ENCODE measurements at regions of chr18 and their contacts with region 1.

Region 1: DNA sequence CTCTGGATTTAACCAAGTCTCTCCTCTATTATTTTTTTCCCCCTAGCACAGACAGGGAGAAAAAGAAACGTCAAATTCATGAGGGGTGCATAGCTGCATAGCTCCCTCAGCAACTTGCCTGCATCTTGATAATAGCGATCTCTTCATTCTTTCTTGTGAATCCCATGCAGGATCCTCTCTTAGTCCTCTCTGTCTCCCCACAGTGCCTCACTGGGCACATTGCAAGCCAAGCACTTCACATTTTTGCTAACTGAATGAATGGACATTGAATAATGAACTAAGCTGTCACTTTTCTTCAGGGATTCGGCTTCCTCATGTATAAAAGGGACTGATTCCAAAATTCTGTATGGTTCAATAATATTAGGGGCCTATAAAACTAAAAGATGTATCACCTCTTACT is 2.9 kb upstream of the EPB41L3 start:
- DNase-seq: peak in 1 of 3 donors; percentile 28
- ATAC-seq: peak; percentile 61 to 67
- H3K4me3 ChIP-seq: no peak overlapping the region
- H3K27ac ChIP-seq: no peak overlapping the region
- H3K4me1 ChIP-seq: no peaks in the 10 kb centered on the region
- H3K27me3 ChIP-seq: no peaks in the 10 kb centered on the region

Region 2: DNA sequence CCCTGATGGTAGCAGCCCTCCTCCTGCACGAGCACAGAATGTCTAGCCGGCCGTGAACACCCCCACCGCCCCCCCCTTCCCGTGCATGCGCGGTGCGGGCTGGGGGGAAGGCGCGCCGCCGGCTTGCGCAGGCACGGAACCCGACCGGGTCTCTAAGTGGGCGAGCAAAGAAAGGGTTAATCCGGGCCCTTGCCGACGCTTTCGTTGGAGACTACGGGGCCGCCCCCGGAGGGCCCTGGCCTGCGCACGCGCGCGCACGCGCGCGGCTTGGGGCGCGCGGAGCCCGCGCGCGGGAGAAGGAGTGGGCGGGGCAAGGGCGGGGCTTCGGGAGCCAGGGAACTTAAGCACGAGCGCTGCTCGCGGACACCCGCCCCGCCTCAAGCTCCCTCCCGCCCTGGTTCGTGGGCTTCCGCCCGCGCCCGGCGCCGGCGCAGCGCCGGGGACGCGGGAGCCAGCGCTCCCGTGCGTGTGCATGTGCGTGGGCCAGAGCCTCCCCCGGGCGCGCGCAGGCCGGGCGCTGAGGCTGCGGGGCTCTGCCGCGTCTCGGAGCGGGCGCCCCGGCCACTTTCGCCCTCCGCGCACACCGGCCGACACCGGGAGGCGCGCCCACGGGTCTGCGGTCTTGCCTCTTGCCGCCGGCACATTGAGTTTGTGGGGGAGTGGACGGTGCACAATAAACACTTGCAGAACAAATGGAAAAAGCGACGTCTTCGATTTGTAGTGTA is 250.5 kb before region 1 on chr18:
- intact Hi-C with region 1: loop called in 1 of 4 experiments (anchors 10 kb)
- DNase-seq: peak; percentile 97 to 99 (median 99)
- ATAC-seq: peak; percentile 94 to 95
- H3K4me3 ChIP-seq: peak overlapping the region; percentile 100
- H3K27ac ChIP-seq: peak overlapping the region; percentile 100
- H3K4me1 ChIP-seq: peaks cover 2% of the 10 kb centered on the region
- H3K27me3 ChIP-seq: no peaks in the 10 kb centered on the region

Region 3: DNA sequence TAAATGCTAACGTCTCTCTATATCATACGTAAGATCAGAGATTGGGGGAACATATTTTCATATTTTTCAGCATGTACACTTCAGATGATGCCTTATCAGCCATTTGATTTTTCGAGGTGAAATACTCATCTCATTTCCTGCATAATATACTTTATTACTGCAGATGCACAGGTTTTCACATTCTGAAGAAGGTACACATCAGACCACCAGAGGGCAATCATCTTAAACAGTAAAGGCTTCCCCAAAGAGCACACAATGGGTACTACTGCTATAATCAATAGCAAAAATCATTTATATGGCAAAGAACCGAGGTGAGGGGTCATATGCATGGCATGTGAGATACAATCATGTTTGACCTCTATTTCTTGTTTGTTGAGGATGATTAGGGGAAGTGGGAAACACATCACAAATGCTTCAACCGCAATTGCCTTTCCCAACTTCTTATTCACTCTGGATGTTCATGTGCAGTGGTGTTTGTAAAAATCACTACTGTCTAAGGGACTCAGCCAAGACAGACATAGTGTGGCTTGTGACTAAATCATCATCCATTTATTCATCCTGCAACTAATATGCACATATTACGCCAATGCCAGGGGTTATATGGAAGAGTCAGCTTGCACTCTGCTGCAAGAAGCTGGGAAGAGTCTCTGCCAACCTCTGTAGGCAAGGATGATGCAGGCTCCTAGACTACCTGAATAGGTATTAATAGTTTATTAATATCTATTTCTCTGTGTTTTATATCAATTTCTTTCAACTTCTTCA is 121.6 kb before region 1 on chr18:
- intact Hi-C with region 1: loop called in 1 of 4 experiments (anchors 10 kb)
- DNase-seq: no peak
- ATAC-seq: no peak
- H3K4me3 ChIP-seq: no peak overlapping the region
- H3K27ac ChIP-seq: no peak overlapping the region
- H3K4me1 ChIP-seq: no peaks in the 10 kb centered on the region
- H3K27me3 ChIP-seq: no peaks in the 10 kb centered on the region

Region 4: DNA sequence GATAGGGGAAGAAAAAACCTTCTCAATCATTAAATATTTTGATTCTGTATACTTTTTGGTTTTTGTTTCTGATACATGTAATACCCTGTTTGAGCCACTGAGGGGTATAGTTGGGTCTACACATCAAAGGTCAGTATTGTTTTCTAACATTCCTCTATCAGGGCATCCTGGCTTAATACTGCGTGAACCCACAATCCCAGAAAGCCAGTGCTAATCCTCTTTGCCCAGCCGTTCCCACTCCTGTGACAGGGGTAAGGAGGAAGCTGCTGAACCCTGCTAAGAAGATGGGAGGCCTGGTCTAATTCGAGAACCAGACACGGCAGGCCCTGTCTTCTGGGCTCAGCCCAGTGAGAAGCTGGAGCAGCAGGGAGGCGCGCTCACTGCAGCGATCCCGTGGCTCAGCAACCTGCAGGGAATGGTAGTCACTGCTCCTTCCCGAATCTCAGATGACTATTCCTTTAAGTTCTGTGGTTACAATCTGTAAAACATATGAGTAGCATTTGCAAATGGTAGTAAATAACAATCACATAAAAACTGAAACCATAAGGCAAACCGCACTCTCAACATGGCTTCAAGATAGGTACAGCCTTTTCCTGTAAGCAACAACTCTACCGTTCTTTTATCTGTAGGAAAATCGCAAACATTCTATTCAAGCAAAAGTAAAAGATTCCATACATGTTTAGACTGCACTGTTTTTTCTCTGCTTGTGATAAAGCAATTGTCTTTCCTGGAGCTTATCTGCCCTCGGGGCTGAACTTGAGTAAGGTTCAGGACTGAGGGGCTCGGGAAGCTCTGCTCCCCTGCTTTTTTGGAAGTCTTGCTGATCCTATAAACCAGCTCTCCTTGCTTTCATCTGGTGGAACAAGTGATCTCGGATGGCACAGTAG is 89.8 kb before region 1 on chr18:
- intact Hi-C with region 1: loop called in 3 of 4 experiments (anchors 10 kb)
- DNase-seq: peak; percentile 24 to 68 (median 58)
- ATAC-seq: peak; percentile 92 to 96
- H3K4me3 ChIP-seq: peak overlapping the region; percentile 29
- H3K27ac ChIP-seq: peak overlapping the region; percentile 51
- H3K4me1 ChIP-seq: peaks cover 1% of the 10 kb centered on the region
- H3K27me3 ChIP-seq: no peaks in the 10 kb centered on the region

Region 5: DNA sequence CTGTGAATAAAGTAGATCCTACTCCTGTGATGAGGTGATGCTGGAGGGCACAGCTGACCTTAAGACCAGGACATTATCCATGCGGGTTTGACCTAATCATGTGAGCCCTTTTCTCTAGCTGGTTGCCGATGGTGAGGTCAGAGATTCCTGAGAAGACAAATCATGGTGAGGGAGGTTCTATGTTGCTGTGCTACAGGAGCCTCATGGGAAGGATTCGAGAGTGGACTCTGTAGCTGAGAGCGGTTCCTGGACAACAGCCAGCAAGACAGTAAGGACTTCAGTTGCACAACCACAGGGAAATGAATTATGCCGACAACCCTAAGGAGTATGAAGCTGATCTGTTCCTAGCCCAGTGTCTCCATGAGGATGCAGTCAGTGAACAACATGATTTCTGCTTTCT is 83.3 kb before region 1 on chr18:
- intact Hi-C with region 1: loop called in 3 of 4 experiments (anchors 10 kb)
- DNase-seq: peak; percentile 65 to 85 (median 78)
- ATAC-seq: peak; percentile 86 to 88
- H3K4me3 ChIP-seq: no peak overlapping the region
- H3K27ac ChIP-seq: no peak overlapping the region
- H3K4me1 ChIP-seq: peaks cover 2% of the 10 kb centered on the region
- H3K27me3 ChIP-seq: no peaks in the 10 kb centered on the region